ENCODE measurements at regions of chr13 and their contacts with region 1.

Region 1: DNA sequence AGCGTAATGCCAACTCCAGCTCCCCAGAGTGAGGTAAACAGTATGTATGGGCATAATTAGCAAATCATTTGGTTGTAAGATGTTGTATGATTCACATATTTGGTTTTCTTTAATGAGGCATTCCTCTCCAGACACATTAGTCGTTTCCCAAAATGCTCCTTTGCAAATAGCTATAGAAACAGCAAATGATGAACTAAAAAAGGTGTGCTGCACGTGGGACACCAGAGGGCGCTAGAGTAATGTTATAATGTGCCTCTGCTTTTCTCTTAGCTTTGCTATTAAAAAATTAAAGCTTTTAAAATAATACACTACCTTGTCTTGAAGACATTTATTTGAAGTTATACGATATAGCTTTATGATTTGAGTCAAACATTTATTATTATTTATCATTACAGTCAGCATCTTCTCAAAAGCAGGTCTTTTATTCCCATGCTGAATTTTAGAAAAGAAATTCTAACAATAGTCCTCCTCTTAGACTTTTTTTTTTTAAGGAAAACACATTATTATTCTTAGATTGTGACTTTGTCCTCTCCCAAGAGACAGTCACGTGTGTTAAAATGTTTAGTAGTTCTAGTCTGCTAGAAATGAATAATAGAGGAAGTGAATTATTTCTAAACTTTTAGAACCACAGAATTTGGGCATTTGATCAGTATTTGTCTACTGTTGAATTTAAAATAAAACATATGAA is 121.6 kb upstream of the FRY start:
- DNase-seq: no peak
- ATAC-seq: peak in 1 of 2 donors; percentile 37
- H3K4me3 ChIP-seq: no peak overlapping the region
- H3K27ac ChIP-seq: peak overlapping the region in 2 of 4 donors; percentile 23 to 27
- H3K4me1 ChIP-seq: peaks cover 10 to 21% of the 10 kb centered on the region in 2 donors
- H3K27me3 ChIP-seq: no peaks in the 10 kb centered on the region
- CTCF ChIP-seq: peak; percentile 78 to 88 (median 82)
- POLR2A ChIP-seq: no peak

Region 2: DNA sequence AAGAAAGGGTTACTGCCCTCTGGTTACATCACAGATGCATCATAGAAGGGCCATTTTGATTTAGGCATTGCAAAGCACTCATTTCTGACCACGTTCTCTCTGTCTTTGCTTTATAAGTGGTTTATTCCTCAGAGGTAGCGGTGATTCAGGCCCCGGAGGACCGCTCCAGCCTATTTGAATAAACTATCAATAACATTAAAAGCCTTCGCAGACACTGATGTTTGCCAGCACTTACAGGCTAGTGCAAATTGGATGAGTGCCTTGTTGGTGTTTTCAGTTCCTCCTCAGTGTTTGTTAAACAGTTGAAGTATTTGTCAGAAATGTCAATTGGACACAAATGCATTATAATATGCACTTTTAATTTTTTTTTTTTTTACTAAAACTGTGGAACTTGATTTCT is 50.4 kb before region 1 on chr13:
- in situ Hi-C with region 1: no loop called
- intact Hi-C with region 1: no loop called
- DNase-seq: no peak
- ATAC-seq: no peak
- H3K4me3 ChIP-seq: no peak overlapping the region
- H3K27ac ChIP-seq: peak overlapping the region in 2 of 4 donors; percentile 7 to 29
- H3K4me1 ChIP-seq: peaks cover 0 to 19% of the 10 kb centered on the region in 2 donors
- H3K27me3 ChIP-seq: no peaks in the 10 kb centered on the region
- CTCF ChIP-seq: no peak
- POLR2A ChIP-seq: no peak

Region 3: GRCh38 chr13:31945202-31945978 is 35.4 kb after region 1 on chr13:
- in situ Hi-C with region 1: no loop called
- intact Hi-C with region 1: loop called (anchors 2 kb)
- DNase-seq: peak; percentile 59 to 77
- ATAC-seq: peak; percentile 89 to 93
- H3K4me3 ChIP-seq: peak overlapping the region; percentile 12 to 42 (median 14)
- H3K27ac ChIP-seq: peak overlapping the region; percentile 36 to 75 (median 50)
- H3K4me1 ChIP-seq: peaks cover 5 to 15% of the 10 kb centered on the region in 2 donors
- H3K27me3 ChIP-seq: no peaks in the 10 kb centered on the region
- CTCF ChIP-seq: no peak
- POLR2A ChIP-seq: peak; percentile 65 to 79

Region 4: GRCh38 chr13:31956980-31957644 is 47.1 kb after region 1 on chr13:
- in situ Hi-C with region 1: no loop called
- intact Hi-C with region 1: no loop called
- DNase-seq: no peak
- ATAC-seq: no peak
- H3K4me3 ChIP-seq: no peak overlapping the region
- H3K27ac ChIP-seq: no peak overlapping the region
- H3K4me1 ChIP-seq: no peaks in the 10 kb centered on the region
- H3K27me3 ChIP-seq: no peaks in the 10 kb centered on the region
- CTCF ChIP-seq: no peak
- POLR2A ChIP-seq: no peak

Region 5: GRCh38 chr13:32031025-32031814 is 121.2 kb after region 1 on chr13 and contains the start of gene FRY:
- in situ Hi-C with region 1: no loop called
- intact Hi-C with region 1: loop called (anchors 5 kb)
- DNase-seq: peak; percentile 48 to 50
- ATAC-seq: peak; percentile 78
- H3K4me3 ChIP-seq: peak within 1 kb of the TSS; percentile 72 to 88 (median 75)
- H3K27ac ChIP-seq: peak within 1 kb of the TSS; percentile 65 to 72 (median 70)
- H3K4me1 ChIP-seq: peaks cover 5 to 7% of the 10 kb centered on the region in 2 donors
- H3K27me3 ChIP-seq: no peaks in the 10 kb centered on the region
- CTCF ChIP-seq: peak in 1 of 5 experiments; percentile 28
- POLR2A ChIP-seq: peak; percentile 27 to 51
- total RNA-seq, gene FRY: 10.1 to 48.3 (median 21.4) TPM

Region 6: GRCh38 chr13:32164622-32165268 is 254.7 kb after region 1 on chr13:
- in situ Hi-C with region 1: no loop called
- intact Hi-C with region 1: loop called (anchors 5 kb)
- DNase-seq: no peak
- ATAC-seq: peak; percentile 47 to 89
- H3K4me3 ChIP-seq: no peak overlapping the region
- H3K27ac ChIP-seq: no peak overlapping the region
- H3K4me1 ChIP-seq: peaks cover 0 to 1% of the 10 kb centered on the region in 2 donors
- H3K27me3 ChIP-seq: no peaks in the 10 kb centered on the region
- CTCF ChIP-seq: peak in 3 of 5 experiments; percentile 33 to 50 (median 50)
- POLR2A ChIP-seq: no peak

Region 7: DNA sequence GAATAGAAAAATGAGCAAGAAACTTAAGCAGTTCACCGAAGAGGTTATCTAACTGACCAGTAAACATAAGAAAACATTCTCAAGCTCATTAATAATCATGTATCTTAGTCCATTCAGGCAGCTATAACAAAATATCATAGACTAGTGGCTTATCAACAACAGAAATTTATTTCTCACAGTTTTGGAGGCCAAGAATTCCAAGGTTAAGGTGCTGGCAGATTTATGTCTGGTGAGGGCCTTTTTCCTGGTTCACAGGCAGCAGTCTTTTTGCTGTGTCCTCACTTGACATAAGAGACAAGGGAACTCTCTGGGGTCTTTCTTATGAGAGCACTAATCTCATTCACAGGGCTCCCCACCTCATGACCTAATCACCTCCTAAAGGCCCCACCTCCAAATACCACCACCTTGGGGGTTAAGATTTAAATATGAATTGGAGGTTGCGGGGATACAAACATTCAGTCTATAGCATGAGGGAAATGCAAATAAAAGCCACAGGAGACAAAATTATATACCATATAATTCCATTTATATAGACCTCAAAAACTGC is 281.5 kb after region 1 on chr13:
- in situ Hi-C with region 1: no loop called
- intact Hi-C with region 1: no loop called
- DNase-seq: no peak
- ATAC-seq: no peak
- H3K4me3 ChIP-seq: no peak overlapping the region
- H3K27ac ChIP-seq: no peak overlapping the region
- H3K4me1 ChIP-seq: no peaks in the 10 kb centered on the region
- H3K27me3 ChIP-seq: no peaks in the 10 kb centered on the region
- CTCF ChIP-seq: no peak
- POLR2A ChIP-seq: no peak

Region 8: DNA sequence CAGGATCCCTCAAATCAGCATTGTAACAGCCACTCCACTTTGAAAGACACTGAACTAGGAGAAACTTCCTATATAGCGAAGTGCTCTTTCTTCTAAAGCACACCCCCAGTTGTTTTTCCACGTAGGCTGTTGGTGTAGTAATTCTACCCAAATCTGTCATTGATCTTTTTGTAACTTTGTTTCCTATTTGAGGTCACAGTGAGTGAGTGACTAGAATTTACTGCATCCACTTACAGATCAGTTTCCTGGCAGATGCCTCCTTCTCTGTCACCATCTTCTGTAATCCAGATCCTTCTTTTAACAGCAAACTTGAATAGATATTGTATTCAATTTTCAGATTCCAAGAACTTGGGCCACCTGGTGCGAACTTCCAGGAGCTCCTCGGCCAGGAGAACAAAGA is 389.9 kb after region 1 on chr13:
- in situ Hi-C with region 1: loop called (anchors 5 to 25 kb)
- intact Hi-C with region 1: no loop called
- DNase-seq: no peak
- ATAC-seq: no peak
- H3K4me3 ChIP-seq: no peak overlapping the region
- H3K27ac ChIP-seq: no peak overlapping the region
- H3K4me1 ChIP-seq: no peaks in the 10 kb centered on the region
- H3K27me3 ChIP-seq: no peaks in the 10 kb centered on the region
- CTCF ChIP-seq: no peak
- POLR2A ChIP-seq: no peak

Region 9: DNA sequence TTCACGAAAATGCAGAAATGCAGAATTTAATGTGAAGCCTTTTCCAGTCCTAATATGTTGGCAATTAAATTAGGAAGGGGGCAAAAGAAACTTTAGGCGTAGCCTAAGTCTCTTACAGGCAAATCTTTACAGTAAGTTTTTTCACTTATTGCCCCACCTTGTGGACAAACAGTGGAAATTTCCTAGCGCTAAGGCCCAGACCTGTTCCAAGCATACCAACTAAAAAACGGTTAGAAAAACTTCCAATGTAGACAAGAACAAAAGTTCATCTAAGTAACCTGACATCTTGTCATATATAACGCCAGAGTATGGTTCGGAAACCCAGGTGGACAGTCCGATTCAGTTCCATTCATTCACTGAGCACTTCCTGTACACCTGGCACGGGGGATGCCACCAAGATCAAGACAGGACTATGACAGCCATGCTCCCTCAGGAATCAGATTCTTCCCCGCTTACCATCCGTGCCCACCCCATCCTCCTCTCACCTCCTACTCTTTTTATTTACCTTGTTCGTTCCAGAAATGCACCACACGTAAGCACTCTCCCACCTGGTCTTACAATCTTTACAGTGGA is 400.2 kb after region 1 on chr13:
- in situ Hi-C with region 1: loop called in 3 of 4 experiments (anchors 10 to 25 kb)
- intact Hi-C with region 1: loop called (anchors 2 kb)
- DNase-seq: peak in 1 of 2 donors; percentile 2
- ATAC-seq: peak in 1 of 2 donors; percentile 81
- H3K4me3 ChIP-seq: peak overlapping the region in 3 of 4 donors; percentile 20 to 37 (median 31)
- H3K27ac ChIP-seq: no peak overlapping the region
- H3K4me1 ChIP-seq: no peaks in the 10 kb centered on the region
- H3K27me3 ChIP-seq: no peaks in the 10 kb centered on the region
- CTCF ChIP-seq: peak; percentile 38 to 71 (median 61)
- POLR2A ChIP-seq: no peak

Region 10: GRCh38 chr13:32315238-32316027 is 405.4 kb after region 1 on chr13 and contains the starts of genes BRCA2 and ZAR1L:
- in situ Hi-C with region 1: loop called in 1 of 4 experiments (anchors 25 kb)
- intact Hi-C with region 1: loop called (anchors 2 kb)
- DNase-seq: peak; percentile 71 to 78
- ATAC-seq: peak; percentile 94 to 95
- H3K4me3 ChIP-seq: peak within 1 kb of the TSS; percentile 63 to 89 (median 76)
- H3K27ac ChIP-seq: peak within 1 kb of the TSS; percentile 84 to 92 (median 90)
- H3K4me1 ChIP-seq: peaks cover 0 to 3% of the 10 kb centered on the region in 2 donors
- H3K27me3 ChIP-seq: no peaks in the 10 kb centered on the region
- CTCF ChIP-seq: peak in 1 of 5 experiments; percentile 9
- POLR2A ChIP-seq: peak; percentile 54 to 70
- total RNA-seq, gene BRCA2: 0.02 to 0.20 (median 0.12) TPM
- total RNA-seq, gene ZAR1L: not detected